Calu3 (cell line): ENCODE measurements at regions of chr15 and their contacts with region 1.

Region 1: GRCh38 chr15:67065444-67066093 is at the start of gene SMAD3:
- DNase-seq: peak; percentile 94
- H3K4me3 Mint-ChIP-seq: peak within 1 kb of the TSS; percentile 85
- H3K27ac Mint-ChIP-seq: peak within 1 kb of the TSS; percentile 80
- H3K4me1 Mint-ChIP-seq: peaks cover 54% of the 10 kb centered on the region
- H3K27me3 Mint-ChIP-seq: no peaks in the 10 kb centered on the region
- CTCF ChIP-seq: no peak
- total RNA-seq, gene SMAD3: 121 and 147 TPM in 2 replicates

Region 2: DNA sequence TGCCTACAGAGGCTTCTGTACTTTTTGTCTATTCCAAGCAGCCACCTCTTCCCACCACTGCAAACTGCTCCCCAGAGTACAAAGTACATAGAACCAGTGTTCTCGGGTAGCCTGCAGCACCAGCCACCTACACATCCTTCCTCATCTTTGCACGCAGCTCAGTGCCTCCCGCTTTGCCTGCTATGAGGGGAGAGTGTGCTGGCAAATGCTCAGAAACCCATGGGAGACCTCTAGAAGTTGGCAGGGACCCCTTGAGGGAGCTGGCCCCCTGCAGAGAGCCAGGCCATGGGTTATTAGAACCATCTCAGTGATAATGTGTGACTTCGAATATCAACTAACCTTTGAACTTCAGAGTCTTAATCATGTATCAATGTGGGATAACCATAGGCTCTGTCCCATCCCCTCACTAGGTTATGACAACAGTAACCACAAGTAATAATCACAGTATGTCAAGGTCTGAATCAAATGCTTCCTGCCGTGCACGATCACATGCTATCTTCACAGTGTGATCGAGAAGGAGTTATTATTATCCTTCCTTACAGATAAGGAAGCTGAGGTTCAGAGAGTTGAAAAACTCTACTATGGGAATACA is 22.9 kb before region 1 on chr15:
- CTCF ChIA-PET with region 1: interaction called, 14 read pairs
- intact Hi-C with region 1: no loop called
- DNase-seq: no peak
- H3K4me3 Mint-ChIP-seq: peak overlapping the region; percentile 42
- H3K27ac Mint-ChIP-seq: no peak overlapping the region
- H3K4me1 Mint-ChIP-seq: peaks cover 30% of the 10 kb centered on the region
- H3K27me3 Mint-ChIP-seq: no peaks in the 10 kb centered on the region
- CTCF ChIP-seq: no peak

Region 3: GRCh38 chr15:67091071-67091979 is 25.8 kb after region 1 on chr15:
- CTCF ChIA-PET with region 1: interaction called, 3 read pairs
- intact Hi-C with region 1: loop called (anchors 2 kb)
- DNase-seq: peak; percentile 90
- H3K4me3 Mint-ChIP-seq: peak overlapping the region; percentile 41
- H3K27ac Mint-ChIP-seq: peak overlapping the region; percentile 82
- H3K4me1 Mint-ChIP-seq: peaks cover 77% of the 10 kb centered on the region
- H3K27me3 Mint-ChIP-seq: no peaks in the 10 kb centered on the region
- CTCF ChIP-seq: no peak

Region 4: DNA sequence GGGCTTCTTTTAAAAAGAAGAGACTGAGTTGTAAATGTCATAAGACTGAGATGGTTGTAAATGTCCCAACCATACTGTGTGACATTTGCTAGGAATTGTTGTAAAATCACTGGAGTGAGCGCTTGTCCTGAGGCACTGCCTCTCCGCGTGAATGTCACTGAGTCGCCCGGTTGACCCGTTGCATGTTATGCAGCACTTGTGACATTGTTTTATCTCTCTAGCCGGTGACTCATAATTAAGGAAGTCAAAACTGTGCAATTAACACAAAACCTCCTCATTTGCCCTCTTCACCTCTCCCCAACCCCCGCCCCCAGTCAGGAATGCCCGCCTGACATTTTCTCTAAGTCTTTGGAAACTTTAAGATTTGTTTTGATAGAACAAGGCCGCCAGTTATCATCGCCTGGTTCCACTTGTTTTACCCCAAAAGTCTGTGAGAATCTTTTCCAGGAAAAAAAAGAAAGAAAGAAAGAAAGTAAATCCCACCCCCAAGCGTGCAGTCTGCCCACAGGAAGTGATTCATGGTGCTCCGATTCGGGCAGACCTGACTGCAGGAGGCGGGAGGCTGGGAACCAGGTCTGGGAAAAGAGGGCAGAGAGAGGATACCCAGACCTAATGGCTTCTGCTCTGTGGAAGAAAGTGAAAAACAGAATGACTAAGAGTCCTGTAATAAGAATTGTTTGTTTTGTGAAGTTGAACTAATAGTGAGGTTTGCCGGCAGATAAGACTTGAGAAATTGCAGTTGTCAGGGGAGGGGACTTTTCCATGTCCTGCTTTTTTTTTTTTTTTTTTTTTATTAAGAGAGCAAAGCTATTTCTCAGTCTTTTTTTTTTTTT is 84.7 kb after region 1 on chr15:
- CTCF ChIA-PET with region 1: no interaction called
- intact Hi-C with region 1: loop called (anchors 2 kb)
- DNase-seq: peak; percentile 92
- H3K4me3 Mint-ChIP-seq: peak overlapping the region; percentile 44
- H3K27ac Mint-ChIP-seq: peak overlapping the region; percentile 79
- H3K4me1 Mint-ChIP-seq: peaks cover 67% of the 10 kb centered on the region
- H3K27me3 Mint-ChIP-seq: no peaks in the 10 kb centered on the region
- CTCF ChIP-seq: no peak

Region 5: GRCh38 chr15:67303490-67304363 is 238.2 kb after region 1 on chr15:
- CTCF ChIA-PET with region 1: no interaction called
- intact Hi-C with region 1: loop called (anchors 10 kb)
- DNase-seq: peak; percentile 38
- H3K4me3 Mint-ChIP-seq: no peak overlapping the region
- H3K27ac Mint-ChIP-seq: no peak overlapping the region
- H3K4me1 Mint-ChIP-seq: no peaks in the 10 kb centered on the region
- H3K27me3 Mint-ChIP-seq: no peaks in the 10 kb centered on the region
- CTCF ChIP-seq: peak; percentile 53